OCI-LY7 (cell line): ENCODE measurements at regions of chr1 and their contacts with region 1.

Region 1: GRCh38 chr1:2525920-2526823 is at the start of gene PANK4:
- DNase-seq: peak; percentile 96
- H3K4me3 ChIP-seq: peak within 1 kb of the TSS; percentile 100
- H3K27ac ChIP-seq: peak within 1 kb of the TSS; percentile 38
- H3K4me1 ChIP-seq: peaks cover 26% of the 10 kb centered on the region
- CTCF ChIP-seq: no peak
- total RNA-seq, gene PANK4: 43.6 and 55.9 TPM in 2 replicates

Region 2: GRCh38 chr1:2499986-2500596 is 26.1 kb before region 1 on chr1:
- CTCF ChIA-PET with region 1: no interaction called
- POLR2A ChIA-PET with region 1: no interaction called
- intact Hi-C with region 1: loop called (anchors 2 kb)
- DNase-seq: peak; percentile 66
- H3K4me3 ChIP-seq: no peak overlapping the region
- H3K27ac ChIP-seq: peak overlapping the region; percentile 16
- H3K4me1 ChIP-seq: peaks cover 54% of the 10 kb centered on the region
- CTCF ChIP-seq: no peak